Activated B cell treated with CpG ODN at 0.5 μM for 24 hours (primary cell): ENCODE measurements at regions of chr14 and their contacts with region 1.

Region 1: GRCh38 chr14:50860478-50861086 is 11.3 kb upstream of the ABHD12B start:
- DNase-seq: peak; percentile 78
- ATAC-seq: peak; percentile 73
- H3K4me3 Mint-ChIP-seq: peak overlapping the region; percentile 89
- H3K27ac Mint-ChIP-seq: peak overlapping the region; percentile 77
- H3K4me1 Mint-ChIP-seq: peaks cover 12% of the 10 kb centered on the region
- H3K27me3 Mint-ChIP-seq: no peaks in the 10 kb centered on the region
- CTCF ChIP-seq: peak; percentile 10

Region 2: GRCh38 chr14:50599700-50600444 is 260.7 kb before region 1 on chr14:
- CTCF ChIA-PET with region 1: interaction called, 17 read pairs
- POLR2A ChIA-PET with region 1: no interaction called
- intact Hi-C with region 1: loop called (anchors 1 kb)
- DNase-seq: no peak
- ATAC-seq: no peak
- H3K4me3 Mint-ChIP-seq: no peak overlapping the region
- H3K27ac Mint-ChIP-seq: no peak overlapping the region
- H3K4me1 Mint-ChIP-seq: no peaks in the 10 kb centered on the region
- H3K27me3 Mint-ChIP-seq: no peaks in the 10 kb centered on the region
- CTCF ChIP-seq: no peak

Region 3: GRCh38 chr14:50741571-50741970 is 119.0 kb before region 1 on chr14:
- CTCF ChIA-PET with region 1: interaction called, 6 read pairs
- POLR2A ChIA-PET with region 1: no interaction called
- intact Hi-C with region 1: loop called (anchors 2 kb)
- DNase-seq: no peak
- ATAC-seq: no peak
- H3K4me3 Mint-ChIP-seq: no peak overlapping the region
- H3K27ac Mint-ChIP-seq: no peak overlapping the region
- H3K4me1 Mint-ChIP-seq: peaks cover 8% of the 10 kb centered on the region
- H3K27me3 Mint-ChIP-seq: no peaks in the 10 kb centered on the region
- CTCF ChIP-seq: no peak

Region 4: GRCh38 chr14:50773632-50774541 is 86.7 kb before region 1 on chr14:
- CTCF ChIA-PET with region 1: interaction called, 216 read pairs
- POLR2A ChIA-PET with region 1: interaction called, 16 read pairs
- intact Hi-C with region 1: loop called (anchors 1 kb)
- DNase-seq: no peak
- ATAC-seq: peak; percentile 67
- H3K4me3 Mint-ChIP-seq: no peak overlapping the region
- H3K27ac Mint-ChIP-seq: no peak overlapping the region
- H3K4me1 Mint-ChIP-seq: peaks cover 17% of the 10 kb centered on the region
- H3K27me3 Mint-ChIP-seq: no peaks in the 10 kb centered on the region
- CTCF ChIP-seq: no peak

Region 5: GRCh38 chr14:50792051-50792477 is 68.5 kb before region 1 on chr14:
- CTCF ChIA-PET with region 1: interaction called, 111 read pairs
- POLR2A ChIA-PET with region 1: interaction called, 16 read pairs
- intact Hi-C with region 1: loop called (anchors 1 kb)
- DNase-seq: no peak
- ATAC-seq: peak; percentile 43
- H3K4me3 Mint-ChIP-seq: peak overlapping the region; percentile 66
- H3K27ac Mint-ChIP-seq: peak overlapping the region; percentile 92
- H3K4me1 Mint-ChIP-seq: peaks cover 98% of the 10 kb centered on the region
- H3K27me3 Mint-ChIP-seq: no peaks in the 10 kb centered on the region
- CTCF ChIP-seq: no peak

Region 6: GRCh38 chr14:50830932-50831725 is 29.5 kb before region 1 on chr14 and contains the start of gene NIN:
- CTCF ChIA-PET with region 1: interaction called, 46 read pairs
- POLR2A ChIA-PET with region 1: interaction called, 50 read pairs
- intact Hi-C with region 1: loop called (anchors 1 kb)
- DNase-seq: peak; percentile 81
- ATAC-seq: peak; percentile 83
- H3K4me3 Mint-ChIP-seq: peak within 1 kb of the TSS; percentile 98
- H3K27ac Mint-ChIP-seq: peak within 1 kb of the TSS; percentile 98
- H3K4me1 Mint-ChIP-seq: peaks cover 72% of the 10 kb centered on the region
- H3K27me3 Mint-ChIP-seq: no peaks in the 10 kb centered on the region
- CTCF ChIP-seq: no peak
- total RNA-seq, gene NIN: 145 and 156 TPM in 2 replicates

Region 7: GRCh38 chr14:51963286-51963685 is 1102.7 kb after region 1 on chr14:
- CTCF ChIA-PET with region 1: no interaction called
- POLR2A ChIA-PET with region 1: no interaction called
- intact Hi-C with region 1: no loop called
- DNase-seq: no peak
- ATAC-seq: no peak
- H3K4me3 Mint-ChIP-seq: no peak overlapping the region
- H3K27ac Mint-ChIP-seq: no peak overlapping the region
- H3K4me1 Mint-ChIP-seq: peaks cover 14% of the 10 kb centered on the region
- H3K27me3 Mint-ChIP-seq: no peaks in the 10 kb centered on the region
- CTCF ChIP-seq: no peak